Calu3 (cell line): ENCODE measurements at regions of chrX and their contacts with region 1.

Region 1: GRCh38 chrX:20515841-20516461 is 249.2 kb upstream of the RPS6KA3 start:
- DNase-seq: peak; percentile 22
- H3K4me3 Mint-ChIP-seq: no peak overlapping the region
- H3K27ac Mint-ChIP-seq: peak overlapping the region; percentile 20
- H3K4me1 Mint-ChIP-seq: peaks cover 48% of the 10 kb centered on the region
- H3K27me3 Mint-ChIP-seq: no peaks in the 10 kb centered on the region
- CTCF ChIP-seq: no peak

Region 2: GRCh38 chrX:20266810-20267606 is 248.9 kb before region 1 on chrX and contains the start of gene RPS6KA3:
- CTCF ChIA-PET with region 1: no interaction called
- intact Hi-C with region 1: loop called (anchors 5 kb)
- DNase-seq: peak; percentile 92
- H3K4me3 Mint-ChIP-seq: peak within 1 kb of the TSS; percentile 96
- H3K27ac Mint-ChIP-seq: peak within 1 kb of the TSS; percentile 87
- H3K4me1 Mint-ChIP-seq: peaks cover 22% of the 10 kb centered on the region
- H3K27me3 Mint-ChIP-seq: no peaks in the 10 kb centered on the region
- CTCF ChIP-seq: no peak
- total RNA-seq, gene RPS6KA3: 63.4 and 65.1 TPM in 2 replicates

Region 3: DNA sequence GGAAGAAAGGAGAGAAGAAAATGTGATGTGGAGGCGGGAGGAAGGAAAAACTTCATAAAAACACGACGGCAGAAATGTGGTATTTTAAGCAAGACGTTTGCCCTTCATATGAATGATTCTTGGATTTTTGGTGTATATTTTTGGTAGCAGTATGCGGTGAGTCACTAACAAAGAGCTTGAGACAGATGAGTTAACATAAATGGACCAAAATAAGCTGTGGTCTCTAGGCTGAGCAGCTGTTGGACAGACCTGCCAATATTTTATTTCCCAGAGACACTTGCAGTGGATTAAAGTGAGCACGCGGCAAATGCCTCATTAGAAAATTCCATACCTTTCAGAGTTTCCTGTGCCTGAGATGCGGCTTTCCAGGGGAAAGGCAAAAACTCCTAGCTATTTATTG is 206.1 kb before region 1 on chrX:
- CTCF ChIA-PET with region 1: no interaction called
- intact Hi-C with region 1: no loop called
- DNase-seq: no peak
- H3K4me3 Mint-ChIP-seq: no peak overlapping the region
- H3K27ac Mint-ChIP-seq: no peak overlapping the region
- H3K4me1 Mint-ChIP-seq: peaks cover 2% of the 10 kb centered on the region
- H3K27me3 Mint-ChIP-seq: no peaks in the 10 kb centered on the region
- CTCF ChIP-seq: no peak